ENCODE measurements at regions of chr3 and their contacts with region 1.

Region 1: DNA sequence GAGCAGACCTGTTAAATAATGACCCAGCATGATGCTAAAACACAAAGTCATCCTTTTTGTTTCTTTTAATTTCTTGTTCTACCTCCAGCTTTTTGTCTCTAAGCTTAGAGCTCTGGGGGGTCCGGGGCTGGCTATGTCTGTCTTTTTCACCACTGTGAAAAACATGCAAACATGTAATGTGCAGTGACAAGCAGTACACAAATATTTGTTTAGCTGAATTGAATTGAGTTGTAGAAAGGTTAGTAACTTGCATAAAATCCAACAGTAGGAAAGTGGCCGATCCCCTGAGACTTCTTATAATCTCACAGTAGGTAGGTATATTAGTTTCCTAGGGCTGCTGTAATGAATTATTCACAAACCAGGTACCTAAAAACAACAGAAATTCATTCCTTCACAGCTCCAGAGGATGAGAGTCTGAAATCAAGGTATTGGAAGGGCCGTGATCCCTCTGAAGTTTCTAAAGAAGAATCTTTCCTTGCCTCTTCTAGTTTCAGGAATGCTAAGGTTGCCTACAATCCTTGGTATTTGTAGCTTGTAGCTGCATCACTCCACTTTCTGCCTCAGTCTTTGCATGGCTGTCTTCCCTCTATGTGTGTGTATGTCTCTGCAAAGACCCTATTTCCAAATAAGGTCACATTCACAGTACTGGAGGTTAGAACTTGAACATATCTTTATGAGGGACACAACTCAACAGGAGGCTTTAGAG is 32.7 kb downstream of the ARL14 start:
- DNase-seq: no peak
- H3K4me3 ChIP-seq: no peak overlapping the region
- H3K27ac ChIP-seq: no peak overlapping the region
- H3K4me1 ChIP-seq: no peaks in the 10 kb centered on the region
- H3K27me3 ChIP-seq: no peaks in the 10 kb centered on the region
- CTCF ChIP-seq: no peak
- EP300 ChIP-seq: no peak
- POLR2A ChIP-seq: no peak

Region 2: DNA sequence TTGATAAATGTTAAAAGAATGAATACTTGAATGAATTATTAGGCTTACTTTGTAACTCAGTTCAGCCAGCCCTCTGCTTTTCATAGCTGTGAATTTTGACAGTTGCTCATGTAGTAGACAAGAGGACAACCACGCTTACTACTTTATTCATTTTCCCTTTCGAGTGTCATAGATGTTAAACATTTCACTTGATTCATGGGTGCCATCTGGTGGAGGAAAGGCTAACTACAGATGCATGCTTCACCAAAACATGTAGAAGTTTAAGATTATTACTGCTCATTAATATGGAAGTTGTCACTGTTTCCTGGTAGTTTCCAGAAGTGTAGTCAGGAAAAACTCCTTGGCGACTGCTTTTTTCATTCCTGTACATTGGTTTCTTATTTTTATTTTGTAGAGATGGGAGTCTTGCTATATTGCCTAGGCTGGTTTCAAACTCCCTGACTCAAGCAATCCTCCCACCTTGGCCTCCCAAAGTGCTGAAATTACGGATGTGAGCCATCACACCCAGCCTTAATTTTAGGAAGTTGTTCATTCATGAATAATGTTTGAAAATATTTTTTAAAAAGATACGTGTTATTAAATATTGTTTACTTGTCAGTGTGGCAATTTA is 232.4 kb after region 1 on chr3:
- intact Hi-C with region 1: loop called (anchors 2 kb)
- DNase-seq: peak; percentile 94
- H3K4me3 ChIP-seq: no peak overlapping the region
- H3K27ac ChIP-seq: no peak overlapping the region
- H3K4me1 ChIP-seq: no peaks in the 10 kb centered on the region
- H3K27me3 ChIP-seq: no peaks in the 10 kb centered on the region
- CTCF ChIP-seq: peak; percentile 87 to 93 (median 91)
- EP300 ChIP-seq: no peak
- POLR2A ChIP-seq: no peak

Measured in esophagus muscularis mucosa (tissue), 4 donors.